IMR-90 (cell line): ENCODE measurements at regions of chr7 and their contacts with region 1.

Region 1: DNA sequence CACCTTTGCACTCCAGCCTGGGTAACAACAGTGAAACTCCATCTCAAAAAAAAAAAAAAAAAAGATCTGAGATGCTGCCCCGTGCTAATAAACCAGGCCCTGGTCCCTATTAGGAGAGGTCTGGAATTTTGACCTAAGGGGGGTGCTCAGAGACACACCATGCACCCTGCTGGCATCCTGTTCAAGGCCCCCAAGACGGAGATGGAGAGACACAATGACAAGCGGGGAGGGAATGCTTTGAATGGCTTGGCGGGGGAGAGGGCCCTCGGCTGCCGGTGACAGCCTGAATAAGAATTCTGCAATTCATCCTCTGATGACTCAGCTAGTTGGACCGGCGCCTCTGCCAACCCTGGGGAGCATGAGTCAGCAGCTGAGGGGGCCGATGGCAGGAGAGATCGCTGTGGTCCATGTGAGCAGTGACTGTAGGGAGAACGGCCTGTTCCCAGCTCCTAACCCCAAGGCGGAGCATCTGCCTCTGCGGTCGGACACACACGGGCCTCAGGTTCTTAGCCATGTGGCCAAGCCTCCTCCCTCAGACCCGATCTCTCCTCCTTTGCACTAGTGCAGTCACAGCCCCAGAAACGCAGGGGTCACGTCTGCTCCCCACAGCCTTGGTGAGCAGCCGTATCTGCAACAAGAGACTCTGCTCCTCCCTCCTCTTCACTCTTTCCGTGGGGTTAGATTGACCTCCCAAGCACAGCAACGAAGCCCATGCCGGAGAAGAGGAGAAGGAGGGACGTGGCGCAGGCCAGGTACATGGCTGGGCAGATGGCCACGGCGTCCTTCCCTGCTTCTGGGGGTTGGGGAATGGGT is 14.9 kb downstream of the TRIM56 start:
- DNase-seq: peak; percentile 99
- ATAC-seq: peak; percentile 93
- H3K4me3 ChIP-seq: no peak overlapping the region
- H3K27ac ChIP-seq: peak overlapping the region; percentile 88
- H3K4me1 ChIP-seq: peaks cover 25% of the 10 kb centered on the region
- H3K27me3 ChIP-seq: no peaks in the 10 kb centered on the region
- CTCF ChIP-seq: no peak
- POLR2A ChIP-seq: 0 out of 2 replicates have a peak, but pooled peaks have one; percentile 14
- RAD21 ChIP-seq: peak; percentile 21; the same call in 1 of the 2 replicates

Region 2: DNA sequence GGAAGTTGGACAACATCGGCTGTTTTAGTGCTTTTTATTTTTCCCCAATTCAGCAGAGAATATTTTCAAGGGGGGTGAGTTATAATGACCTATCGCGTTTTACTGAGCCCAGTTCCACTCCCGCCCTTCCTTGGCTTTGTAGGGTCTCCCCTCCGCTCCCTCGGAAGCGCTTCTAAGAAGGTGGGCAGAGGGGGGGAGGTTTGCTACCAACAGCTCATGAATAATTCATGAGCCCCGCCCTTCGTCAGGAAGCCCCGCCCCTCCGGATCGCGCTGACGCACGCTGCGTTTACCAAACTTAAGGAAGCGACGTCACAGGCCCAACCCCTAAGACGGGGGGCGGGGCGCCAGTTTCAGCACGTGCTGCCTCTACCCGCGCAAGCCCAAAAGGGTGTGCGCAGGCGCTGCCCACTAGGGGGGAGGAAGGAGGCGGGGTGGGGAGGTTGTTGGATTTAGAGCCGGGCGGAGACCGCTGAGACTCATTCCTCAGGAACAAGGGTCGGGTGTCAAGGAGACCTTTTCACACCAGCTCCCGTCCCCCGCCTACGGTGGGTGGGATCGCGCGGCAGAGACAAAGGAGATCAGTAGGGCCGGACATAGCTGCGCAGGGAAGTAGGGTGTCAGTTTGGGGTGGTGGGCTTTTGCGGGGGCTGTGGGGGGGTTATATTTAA is 671.1 kb before region 1 on chr7:
- CTCF ChIA-PET with region 1: no interaction called
- POLR2A ChIA-PET with region 1: no interaction called
- dilution Hi-C with region 1: no loop called
- in situ Hi-C with region 1: loop called (anchors 25 kb)
- intact Hi-C with region 1: no loop called
- DNase-seq: peak; percentile 99
- ATAC-seq: peak; percentile 74
- H3K4me3 ChIP-seq: peak overlapping the region; percentile 64
- H3K27ac ChIP-seq: peak overlapping the region; percentile 97
- H3K4me1 ChIP-seq: peaks cover 7% of the 10 kb centered on the region; the same call in 1 of the 2 replicates
- H3K27me3 ChIP-seq: no peaks in the 10 kb centered on the region
- CTCF ChIP-seq: no peak
- POLR2A ChIP-seq: peak; percentile 88
- RAD21 ChIP-seq: no peak

Region 3: DNA sequence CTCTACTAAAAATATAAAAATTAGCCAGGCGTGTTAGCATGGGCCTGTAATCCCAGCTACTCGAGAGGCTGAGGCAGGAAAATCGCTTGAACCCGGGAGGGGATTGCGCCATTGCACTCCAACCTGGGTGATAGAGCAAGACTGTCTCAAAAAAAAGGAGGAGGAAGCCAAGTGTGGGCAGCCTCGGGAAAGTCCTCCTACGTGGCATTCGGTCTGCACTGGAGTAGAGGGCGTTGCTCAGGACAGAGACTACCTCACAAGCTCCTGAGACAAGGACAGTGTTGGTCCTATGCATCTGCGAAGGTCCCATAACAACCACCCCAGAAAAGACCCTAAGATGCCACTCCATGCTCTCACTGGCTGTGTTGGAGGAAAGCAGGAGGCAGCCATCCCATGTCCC is 16.7 kb after region 1 on chr7:
- CTCF ChIA-PET with region 1: no interaction called
- POLR2A ChIA-PET with region 1: no interaction called
- dilution Hi-C with region 1: no loop called
- in situ Hi-C with region 1: no loop called
- intact Hi-C with region 1: loop called (anchors 1 kb)
- DNase-seq: no peak
- ATAC-seq: no peak; the same call in 1 of the 2 replicates
- H3K4me3 ChIP-seq: no peak overlapping the region
- H3K27ac ChIP-seq: peak overlapping the region; percentile 86
- H3K4me1 ChIP-seq: peaks cover 13% of the 10 kb centered on the region
- H3K27me3 ChIP-seq: no peaks in the 10 kb centered on the region
- CTCF ChIP-seq: no peak
- POLR2A ChIP-seq: no peak
- RAD21 ChIP-seq: no peak

Region 4: DNA sequence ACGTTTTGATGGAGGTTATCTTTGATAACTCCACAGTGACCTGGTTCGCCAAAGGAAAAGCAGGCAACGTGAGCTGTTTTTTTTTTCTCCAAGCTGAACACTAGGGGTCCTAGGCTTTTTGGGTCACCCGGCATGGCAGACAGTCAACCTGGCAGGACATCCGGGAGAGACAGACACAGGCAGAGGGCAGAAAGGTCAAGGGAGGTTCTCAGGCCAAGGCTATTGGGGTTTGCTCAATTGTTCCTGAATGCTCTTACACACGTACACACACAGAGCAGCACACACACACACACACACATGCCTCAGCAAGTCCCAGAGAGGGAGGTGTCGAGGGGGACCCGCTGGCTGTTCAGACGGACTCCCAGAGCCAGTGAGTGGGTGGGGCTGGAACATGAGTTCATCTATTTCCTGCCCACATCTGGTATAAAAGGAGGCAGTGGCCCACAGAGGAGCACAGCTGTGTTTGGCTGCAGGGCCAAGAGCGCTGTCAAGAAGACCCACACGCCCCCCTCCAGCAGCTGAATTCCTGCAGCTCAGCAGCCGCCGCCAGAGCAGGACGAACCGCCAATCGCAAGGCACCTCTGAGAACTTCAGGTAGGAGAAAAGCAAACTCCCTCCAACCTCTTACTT is 26.6 kb after region 1 on chr7 and contains the start of gene SERPINE1:
- CTCF ChIA-PET with region 1: interaction called, 5 read pairs
- POLR2A ChIA-PET with region 1: interaction called, 3 read pairs
- dilution Hi-C with region 1: no loop called
- in situ Hi-C with region 1: no loop called
- intact Hi-C with region 1: loop called (anchors 1 kb)
- DNase-seq: peak; percentile 100
- ATAC-seq: peak; percentile 58
- H3K4me3 ChIP-seq: peak within 1 kb of the TSS; percentile 56
- H3K27ac ChIP-seq: peak within 1 kb of the TSS; percentile 89
- H3K4me1 ChIP-seq: peaks cover 27% of the 10 kb centered on the region
- H3K27me3 ChIP-seq: no peaks in the 10 kb centered on the region
- CTCF ChIP-seq: peak; percentile 22; the same call in 1 of the 2 replicates
- POLR2A ChIP-seq: peak; percentile 99
- RAD21 ChIP-seq: peak; percentile 33; the same call in 1 of the 2 replicates
- total RNA-seq, gene SERPINE1: 1,441 and 1,485 TPM in 2 replicates